Mammary epithelial cell (primary cell): ENCODE measurements at regions of chr1 and their contacts with region 1.

Region 1: GRCh38 chr1:153967082-153968000 is at the start of gene CREB3L4:
- DNase-seq: peak; percentile 95
- H3K4me3 ChIP-seq: peak within 1 kb of the TSS; percentile 56 to 85 (median 79)
- H3K27ac ChIP-seq: peak within 1 kb of the TSS; percentile 77
- H3K4me1 ChIP-seq: peaks cover 17% of the 10 kb centered on the region
- H3K27me3 ChIP-seq: no peaks in the 10 kb centered on the region
- CTCF ChIP-seq: peak; percentile 21 to 43
- total RNA-seq, gene CREB3L4: 6.7 to 8.8 TPM

Region 2: DNA sequence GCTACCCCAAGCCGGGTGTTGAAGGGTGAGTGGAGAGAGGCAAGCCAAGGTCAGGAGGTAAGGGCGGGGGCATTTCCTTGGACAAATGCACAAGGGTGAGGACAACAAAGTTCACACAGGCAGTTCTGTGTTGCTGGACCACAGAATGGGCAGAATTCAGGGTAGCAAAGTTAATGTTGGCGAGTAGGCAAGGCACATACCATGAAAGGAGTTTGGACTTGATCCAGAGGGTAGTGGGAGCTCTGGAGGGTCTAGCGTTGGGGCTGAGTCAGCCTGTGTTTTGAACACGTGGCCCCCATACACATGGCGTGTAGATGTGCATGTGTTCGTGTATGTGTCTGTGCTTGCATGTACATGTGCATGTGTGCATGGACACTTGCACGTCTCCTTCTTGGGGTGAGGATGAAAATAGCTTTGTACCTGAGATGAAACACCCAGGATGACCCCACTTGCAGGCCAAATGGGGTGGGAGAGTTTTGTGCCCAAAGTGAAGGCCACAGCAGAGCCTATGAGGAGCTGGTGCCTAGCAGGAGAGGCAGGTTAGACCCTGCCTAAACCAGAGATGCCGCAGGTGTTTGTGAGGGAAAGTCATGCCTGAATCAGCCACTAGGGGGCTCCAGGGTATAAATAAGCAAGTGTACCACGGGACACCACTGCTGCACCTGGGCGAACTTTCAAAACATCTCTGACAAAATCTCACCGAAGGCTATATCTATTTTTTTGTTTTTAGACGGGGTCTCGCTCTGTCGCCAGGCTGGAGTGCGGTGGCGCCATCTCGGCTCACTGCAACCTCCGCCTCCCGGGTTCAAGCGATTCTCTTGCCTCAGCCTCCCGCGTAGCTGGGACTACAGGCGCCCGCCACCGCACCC is 170.3 kb before region 1 on chr1:
- CTCF ChIA-PET with region 1: no interaction called
- dilution Hi-C with region 1: no loop called
- in situ Hi-C with region 1: no loop called
- intact Hi-C with region 1: loop called (anchors 5 kb)
- DNase-seq: peak; percentile 59
- H3K4me3 ChIP-seq: no peak overlapping the region
- H3K27ac ChIP-seq: no peak overlapping the region
- H3K4me1 ChIP-seq: no peaks in the 10 kb centered on the region
- H3K27me3 ChIP-seq: no peaks in the 10 kb centered on the region
- CTCF ChIP-seq: peak; percentile 88 to 90

Region 3: DNA sequence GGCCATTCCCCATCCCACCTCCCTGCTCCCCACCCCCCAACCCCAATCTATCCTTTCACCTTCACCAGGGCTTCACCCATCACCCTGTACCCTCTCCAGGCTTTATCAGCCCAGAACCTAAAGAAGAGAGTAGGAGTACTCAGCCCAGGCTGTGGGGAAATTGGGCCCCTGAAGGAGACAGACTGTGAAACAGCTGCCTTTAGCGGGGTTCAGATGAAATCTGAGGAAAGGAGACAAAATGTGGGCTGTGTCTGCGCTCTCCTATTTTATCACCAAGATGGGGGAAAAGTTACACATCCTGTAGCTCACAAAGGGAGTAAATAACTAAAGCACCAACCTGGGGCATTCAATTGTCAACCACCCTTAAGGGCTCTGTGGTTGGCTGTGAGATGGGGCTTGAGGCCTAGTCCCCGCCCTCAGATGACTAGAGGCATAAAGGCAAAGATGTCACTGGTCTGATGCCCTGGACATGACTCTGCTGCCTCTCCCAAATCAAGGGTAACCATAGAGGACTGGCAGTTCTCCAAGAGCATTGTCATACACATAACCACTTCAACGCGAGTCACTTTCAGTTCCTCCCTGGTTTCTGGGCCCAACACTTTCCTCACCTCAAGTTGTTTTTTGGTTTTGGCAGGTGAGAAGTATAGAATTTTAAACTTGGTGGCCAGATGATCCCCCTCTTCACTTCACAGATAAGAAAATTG is 162.1 kb before region 1 on chr1:
- CTCF ChIA-PET with region 1: no interaction called
- dilution Hi-C with region 1: loop called (anchors 5 kb)
- in situ Hi-C with region 1: no loop called
- intact Hi-C with region 1: no loop called
- DNase-seq: peak; percentile 93
- H3K4me3 ChIP-seq: no peak overlapping the region
- H3K27ac ChIP-seq: peak overlapping the region; percentile 82
- H3K4me1 ChIP-seq: peaks cover 12% of the 10 kb centered on the region
- H3K27me3 ChIP-seq: no peaks in the 10 kb centered on the region
- CTCF ChIP-seq: no peak

Region 4: GRCh38 chr1:153827168-153827964 is 140.0 kb before region 1 on chr1:
- CTCF ChIA-PET with region 1: no interaction called
- dilution Hi-C with region 1: no loop called
- in situ Hi-C with region 1: no loop called
- intact Hi-C with region 1: loop called (anchors 5 kb)
- DNase-seq: no peak
- H3K4me3 ChIP-seq: no peak overlapping the region
- H3K27ac ChIP-seq: no peak overlapping the region
- H3K4me1 ChIP-seq: no peaks in the 10 kb centered on the region
- H3K27me3 ChIP-seq: no peaks in the 10 kb centered on the region
- CTCF ChIP-seq: peak in 1 of 2 donors; percentile 5

Region 5: DNA sequence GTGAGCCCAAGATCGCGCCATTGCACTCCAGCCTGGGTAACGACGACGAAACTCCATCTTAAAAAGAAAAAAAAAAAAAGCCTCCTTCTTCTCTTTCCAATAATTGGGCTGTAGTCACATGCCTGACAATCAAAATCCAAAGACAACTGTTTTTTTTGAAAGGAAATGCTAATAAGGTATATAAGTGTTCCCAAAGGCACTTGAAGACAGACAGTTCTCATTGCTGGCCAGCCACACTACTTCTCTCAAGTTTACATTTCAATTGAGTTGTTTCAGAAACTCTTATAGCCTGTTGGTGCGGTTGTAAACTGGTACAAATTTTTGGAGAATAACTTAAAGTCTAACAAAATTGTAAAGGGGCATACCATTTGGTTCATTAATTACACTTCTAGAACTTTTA is 67.8 kb before region 1 on chr1:
- CTCF ChIA-PET with region 1: no interaction called
- dilution Hi-C with region 1: no loop called
- in situ Hi-C with region 1: no loop called
- intact Hi-C with region 1: no loop called
- DNase-seq: no peak
- H3K4me3 ChIP-seq: no peak overlapping the region
- H3K27ac ChIP-seq: no peak overlapping the region
- H3K4me1 ChIP-seq: peaks cover 5% of the 10 kb centered on the region
- H3K27me3 ChIP-seq: no peaks in the 10 kb centered on the region
- CTCF ChIP-seq: no peak

Region 6: GRCh38 chr1:153977250-153978240 is 10.2 kb after region 1 on chr1 and contains the start of gene JTB:
- CTCF ChIA-PET with region 1: no interaction called
- dilution Hi-C with region 1: no loop called
- in situ Hi-C with region 1: no loop called
- intact Hi-C with region 1: loop called (anchors 1 kb)
- DNase-seq: peak; percentile 77
- H3K4me3 ChIP-seq: peak within 1 kb of the TSS; percentile 51 to 93 (median 71)
- H3K27ac ChIP-seq: peak within 1 kb of the TSS; percentile 51
- H3K4me1 ChIP-seq: peaks cover 10% of the 10 kb centered on the region
- H3K27me3 ChIP-seq: no peaks in the 10 kb centered on the region
- CTCF ChIP-seq: no peak
- total RNA-seq, gene JTB: 58.7 to 60.5 TPM

Region 7: DNA sequence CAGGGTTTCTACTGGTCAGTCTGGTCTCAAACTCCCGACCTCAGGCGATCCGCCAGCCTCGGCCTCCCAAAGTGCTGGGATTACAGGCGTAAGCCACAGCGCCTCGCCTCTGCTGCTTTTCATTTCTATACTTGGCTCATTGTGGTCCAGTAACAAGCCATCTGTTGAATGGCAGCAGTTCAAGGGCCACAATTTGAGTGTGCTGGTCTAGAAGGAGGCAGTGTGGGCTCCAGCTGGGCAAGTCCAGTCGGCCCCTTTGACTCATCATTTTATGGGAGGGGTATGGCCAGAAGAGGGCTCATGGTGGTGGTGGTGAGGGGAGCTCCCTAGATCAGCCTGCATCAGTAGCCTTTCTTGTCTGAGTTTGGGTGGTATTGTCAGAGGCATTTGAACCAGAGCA is 391.2 kb after region 1 on chr1:
- CTCF ChIA-PET with region 1: no interaction called
- dilution Hi-C with region 1: no loop called
- in situ Hi-C with region 1: no loop called
- intact Hi-C with region 1: no loop called
- DNase-seq: no peak
- H3K4me3 ChIP-seq: no peak overlapping the region
- H3K27ac ChIP-seq: no peak overlapping the region
- H3K4me1 ChIP-seq: peaks cover 2% of the 10 kb centered on the region
- H3K27me3 ChIP-seq: no peaks in the 10 kb centered on the region
- CTCF ChIP-seq: no peak